Aorta (tissue), 5 donors: ENCODE measurements at regions of chr2 and their contacts with region 1.

Region 1: DNA sequence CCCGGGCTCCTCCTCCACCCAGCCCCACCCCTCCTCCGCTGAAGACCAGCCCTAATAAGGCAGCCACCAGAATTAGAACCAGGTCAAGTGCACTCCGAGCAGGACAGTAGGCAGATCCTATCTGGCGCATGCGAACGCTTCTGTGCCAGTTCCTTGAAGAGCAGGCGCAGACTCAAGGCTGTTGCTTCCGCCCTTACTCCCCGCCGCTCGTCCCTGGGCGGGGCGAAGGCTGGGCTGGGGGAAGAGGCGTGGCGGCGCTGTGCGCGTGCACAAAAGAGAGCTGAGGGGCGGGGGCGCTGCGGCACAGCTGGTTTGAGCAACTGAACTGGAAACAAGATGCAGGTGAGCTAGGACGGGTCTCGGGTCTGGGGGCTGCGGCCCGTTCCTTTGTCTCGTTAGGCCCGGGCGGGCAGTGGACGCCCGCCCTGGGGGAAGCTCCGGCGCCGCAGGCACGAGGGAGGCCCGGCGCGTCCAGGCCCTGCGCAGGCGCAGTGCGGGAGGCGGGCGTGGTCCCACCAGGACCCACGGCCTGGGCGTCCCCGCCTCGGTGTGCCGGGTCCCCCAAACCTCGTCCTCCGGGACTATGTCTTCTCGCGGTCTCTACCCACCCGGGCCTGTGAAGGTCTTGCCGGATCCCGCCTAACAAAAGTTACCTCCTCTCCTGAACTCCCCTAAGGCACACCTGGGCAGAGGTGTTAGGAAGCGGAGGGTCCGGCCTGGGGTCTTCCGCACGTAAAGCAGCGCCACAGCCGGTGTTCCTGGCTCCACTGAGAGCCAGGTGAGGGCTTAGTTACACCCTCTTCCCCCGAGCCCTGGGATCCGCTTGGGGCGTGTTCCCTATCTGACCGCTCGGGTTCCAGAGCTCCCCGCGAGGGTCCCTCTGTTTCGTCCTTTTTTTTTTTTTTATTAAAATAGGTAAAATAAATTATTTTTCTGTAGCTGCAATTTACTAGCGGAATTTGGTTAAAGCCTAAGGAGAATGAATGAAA is at the start of gene PDCL3:
- DNase-seq: peak; percentile 98
- ATAC-seq: peak; percentile 98
- H3K4me3 ChIP-seq: peak within 1 kb of the TSS; percentile 59 to 82
- H3K27ac ChIP-seq: peak within 1 kb of the TSS; percentile 65 to 86
- H3K4me1 ChIP-seq: no peaks in the 10 kb centered on the region
- H3K27me3 ChIP-seq: no peaks in the 10 kb centered on the region
- total RNA-seq, gene PDCL3: 15.8 to 24.7 TPM

Region 2: DNA sequence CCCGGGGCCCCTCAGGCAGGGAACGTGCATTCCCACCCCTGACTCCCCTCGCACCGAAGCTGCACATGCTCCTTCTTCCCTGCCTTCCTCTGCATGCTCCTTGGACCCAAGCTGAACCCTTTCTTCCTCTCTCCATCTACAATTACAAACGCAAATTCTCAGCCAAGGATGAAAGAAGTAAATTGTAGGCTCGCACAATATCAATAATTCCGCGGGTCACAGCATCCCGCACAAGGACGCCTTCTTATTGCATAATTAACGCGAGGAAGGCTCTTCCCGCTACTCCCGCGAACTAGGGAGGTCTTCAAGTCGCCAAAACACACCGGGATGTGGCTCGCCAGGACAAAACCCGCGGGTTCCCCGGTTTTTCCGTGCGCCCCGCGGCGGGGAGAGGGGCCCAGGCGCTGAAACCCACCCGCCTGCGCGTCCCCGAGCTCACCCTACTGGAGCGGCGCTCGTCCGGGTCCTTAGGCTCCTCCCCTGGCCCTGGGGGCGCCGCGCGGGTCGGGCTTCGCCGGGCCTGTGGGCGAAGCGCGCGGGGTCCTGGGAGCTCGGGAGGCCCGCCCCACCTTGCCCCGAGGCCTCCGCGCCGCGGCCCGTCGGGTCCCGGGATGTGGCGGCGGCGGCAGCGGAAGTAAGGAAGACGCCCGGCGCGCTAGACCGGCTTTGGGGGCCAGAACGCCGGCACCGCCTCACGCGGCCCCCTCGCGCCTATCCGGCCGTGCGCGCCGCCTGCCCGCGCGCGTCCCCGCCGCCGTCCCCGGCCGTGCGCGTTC is 145.9 kb before region 1 on chr2 and contains the start of gene CHST10:
- intact Hi-C with region 1: loop called (anchors 5 to 10 kb)
- DNase-seq: peak; percentile 66 to 87
- ATAC-seq: peak; percentile 88
- H3K4me3 ChIP-seq: peak within 1 kb of the TSS; percentile 97 to 98
- H3K27ac ChIP-seq: peak within 1 kb of the TSS; percentile 65 to 77
- H3K4me1 ChIP-seq: no peaks in the 10 kb centered on the region
- H3K27me3 ChIP-seq: no peaks in the 10 kb centered on the region
- total RNA-seq, gene CHST10: 6.0 to 6.7 TPM

Region 3: DNA sequence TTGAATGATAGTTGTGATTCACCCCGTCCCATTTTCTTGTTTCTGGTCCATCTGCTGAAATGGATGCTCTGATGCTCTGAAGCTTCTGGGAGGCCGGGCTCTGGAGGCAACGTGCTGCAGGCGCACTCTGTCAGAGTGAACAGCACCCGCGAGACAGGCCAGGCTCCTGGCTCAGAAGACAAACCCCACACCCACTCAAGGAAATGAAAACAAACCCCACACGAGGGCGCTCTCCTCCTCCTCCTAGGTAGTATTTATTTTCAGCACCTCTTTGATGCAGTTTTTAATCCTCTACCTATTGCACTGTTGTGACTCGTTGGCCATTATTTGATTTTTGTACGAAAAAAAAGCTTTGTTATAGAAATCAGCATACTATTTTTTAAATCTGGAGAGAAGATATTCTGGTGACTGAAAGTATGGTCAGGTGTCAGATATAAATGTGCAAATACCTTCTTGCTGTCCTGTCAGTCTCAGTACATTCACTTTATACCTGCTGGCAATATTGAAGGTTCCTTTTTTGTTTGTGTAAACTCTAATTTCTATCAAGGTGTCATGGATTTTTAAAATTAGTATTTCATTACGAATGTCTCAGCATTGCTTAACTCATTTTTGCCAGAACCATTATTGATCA is 135.3 kb before region 1 on chr2:
- intact Hi-C with region 1: loop called in 1 of 2 experiments (anchors 10 kb)
- DNase-seq: no peak
- ATAC-seq: no peak
- H3K4me3 ChIP-seq: no peak overlapping the region
- H3K27ac ChIP-seq: no peak overlapping the region
- H3K4me1 ChIP-seq: no peaks in the 10 kb centered on the region
- H3K27me3 ChIP-seq: no peaks in the 10 kb centered on the region

Region 4: GRCh38 chr2:100494712-100495111 is 68.3 kb before region 1 on chr2:
- intact Hi-C with region 1: no loop called
- DNase-seq: no peak
- ATAC-seq: no peak
- H3K4me3 ChIP-seq: no peak overlapping the region
- H3K27ac ChIP-seq: no peak overlapping the region
- H3K4me1 ChIP-seq: no peaks in the 10 kb centered on the region
- H3K27me3 ChIP-seq: peaks cover 0 to 1% of the 10 kb centered on the region in 2 donors